ENCODE measurements at regions of chr2 and their contacts with region 1.

Region 1: DNA sequence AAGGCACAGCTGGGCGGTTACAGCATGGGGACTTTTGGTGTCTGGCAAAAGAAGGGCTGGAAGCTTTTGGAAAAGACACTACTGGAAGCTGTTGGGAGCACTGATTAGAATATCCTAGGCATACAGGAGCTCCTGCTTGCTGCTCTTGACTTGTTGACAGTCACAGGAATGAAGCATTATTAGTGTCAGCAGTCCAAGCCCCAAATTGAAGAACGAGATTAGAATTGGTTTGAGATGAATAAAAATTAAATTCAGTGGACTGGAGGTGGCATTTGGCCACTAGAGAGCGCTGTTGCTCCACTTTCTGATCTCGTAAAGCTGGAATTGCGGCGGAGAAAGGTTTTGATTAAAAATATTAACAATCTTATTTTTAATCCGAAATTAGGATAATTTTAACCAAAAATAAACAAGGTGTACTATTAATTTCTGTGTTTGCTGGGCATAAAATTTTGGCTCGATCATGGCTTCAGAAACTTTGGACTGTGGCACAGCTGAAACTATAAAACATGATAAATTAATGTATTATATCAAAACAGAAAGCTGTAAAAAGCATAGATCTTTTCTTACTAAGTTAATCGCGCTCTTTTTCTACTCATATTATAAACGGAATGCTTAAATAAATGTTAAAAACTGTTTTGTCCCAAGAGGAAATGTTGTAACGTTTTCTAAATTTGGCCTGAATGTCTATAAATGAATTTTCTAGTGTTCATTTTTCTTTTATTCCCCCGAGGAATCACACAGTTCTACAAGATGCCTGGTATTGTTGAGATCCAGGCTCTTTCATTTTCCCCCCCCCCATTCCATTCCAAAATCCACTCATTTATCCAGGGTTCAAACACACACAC is 2.4 kb upstream of the HOXD8 start:
- DNase-seq: no peak
- H3K4me3 ChIP-seq: no peak overlapping the region
- H3K27ac ChIP-seq: peak overlapping the region in 2 of 4 donors; percentile 49 to 53
- H3K4me1 ChIP-seq: peaks cover 9 to 60% (median 9%) of the 10 kb centered on the region in 3 donors
- H3K27me3 ChIP-seq: peaks cover 34 to 100% (median 57%) of the 10 kb centered on the region in 4 donors
- CTCF ChIP-seq: peak; percentile 84 to 91 (median 88)
- POLR2A ChIP-seq: no peak

Region 2: DNA sequence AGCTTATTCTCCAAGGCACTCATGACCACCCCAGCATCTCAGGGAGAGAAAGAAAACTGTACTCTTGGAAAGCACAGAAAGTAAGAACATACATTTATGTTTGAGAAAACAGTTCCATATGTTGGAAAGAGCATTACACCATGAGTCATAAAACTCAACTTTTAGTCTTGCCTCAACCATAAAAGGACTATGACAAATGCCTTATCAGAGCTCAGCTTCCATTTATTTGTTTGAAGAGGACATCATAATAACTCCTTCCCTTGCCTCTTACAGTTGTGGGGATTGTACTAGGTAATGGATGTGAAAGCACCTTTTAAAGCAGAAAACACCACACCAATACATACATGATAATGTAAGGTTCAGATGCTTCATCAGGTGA is 495.9 kb before region 1 on chr2:
- intact Hi-C with region 1: no loop called
- DNase-seq: no peak
- H3K4me3 ChIP-seq: no peak overlapping the region
- H3K27ac ChIP-seq: no peak overlapping the region
- H3K4me1 ChIP-seq: no peaks in the 10 kb centered on the region
- H3K27me3 ChIP-seq: no peaks in the 10 kb centered on the region
- CTCF ChIP-seq: no peak
- POLR2A ChIP-seq: no peak

Region 3: GRCh38 chr2:176638167-176639015 is 511.2 kb after region 1 on chr2:
- intact Hi-C with region 1: loop called (anchors 5 kb)
- DNase-seq: no peak
- H3K4me3 ChIP-seq: peak overlapping the region; percentile 45 to 71 (median 57)
- H3K27ac ChIP-seq: peak overlapping the region in 2 of 4 donors; percentile 70 to 81
- H3K4me1 ChIP-seq: peaks cover 3 to 9% (median 7%) of the 10 kb centered on the region in 3 donors
- H3K27me3 ChIP-seq: peaks cover 11 to 95% (median 15%) of the 10 kb centered on the region in 4 donors
- CTCF ChIP-seq: peak; percentile 34 to 84 (median 74)
- POLR2A ChIP-seq: no peak

Region 4: GRCh38 chr2:176814306-176815052 is 687.3 kb after region 1 on chr2:
- intact Hi-C with region 1: loop called (anchors 10 kb)
- DNase-seq: no peak
- H3K4me3 ChIP-seq: no peak overlapping the region
- H3K27ac ChIP-seq: peak overlapping the region in 1 of 4 donors; percentile 6
- H3K4me1 ChIP-seq: peaks cover 0 to 7% (median 0%) of the 10 kb centered on the region in 3 donors
- H3K27me3 ChIP-seq: peaks cover 0 to 4% (median 0%) of the 10 kb centered on the region in 4 donors
- CTCF ChIP-seq: peak in 5 of 6 experiments; percentile 39 to 58 (median 51)
- POLR2A ChIP-seq: no peak

Region 5: GRCh38 chr2:177148477-177149154 is 1021.5 kb after region 1 on chr2:
- intact Hi-C with region 1: loop called (anchors 10 kb)
- DNase-seq: no peak
- H3K4me3 ChIP-seq: peak overlapping the region; percentile 8 to 66 (median 38)
- H3K27ac ChIP-seq: peak overlapping the region in 1 of 4 donors; percentile 40
- H3K4me1 ChIP-seq: peaks cover 0 to 17% (median 10%) of the 10 kb centered on the region in 3 donors
- H3K27me3 ChIP-seq: peaks cover 0 to 73% (median 6%) of the 10 kb centered on the region in 4 donors
- CTCF ChIP-seq: peak; percentile 62 to 78 (median 71)
- POLR2A ChIP-seq: no peak